Activated CD4-positive, alpha-beta T cell treated with anti-CD3 and anti-CD28 coated beads, Interleukin-2, amount 10 ng/mL, durations not matched to agents 24 days and 14 days (primary cell): ENCODE measurements at regions of chr14 and their contacts with region 1.

Region 1: DNA sequence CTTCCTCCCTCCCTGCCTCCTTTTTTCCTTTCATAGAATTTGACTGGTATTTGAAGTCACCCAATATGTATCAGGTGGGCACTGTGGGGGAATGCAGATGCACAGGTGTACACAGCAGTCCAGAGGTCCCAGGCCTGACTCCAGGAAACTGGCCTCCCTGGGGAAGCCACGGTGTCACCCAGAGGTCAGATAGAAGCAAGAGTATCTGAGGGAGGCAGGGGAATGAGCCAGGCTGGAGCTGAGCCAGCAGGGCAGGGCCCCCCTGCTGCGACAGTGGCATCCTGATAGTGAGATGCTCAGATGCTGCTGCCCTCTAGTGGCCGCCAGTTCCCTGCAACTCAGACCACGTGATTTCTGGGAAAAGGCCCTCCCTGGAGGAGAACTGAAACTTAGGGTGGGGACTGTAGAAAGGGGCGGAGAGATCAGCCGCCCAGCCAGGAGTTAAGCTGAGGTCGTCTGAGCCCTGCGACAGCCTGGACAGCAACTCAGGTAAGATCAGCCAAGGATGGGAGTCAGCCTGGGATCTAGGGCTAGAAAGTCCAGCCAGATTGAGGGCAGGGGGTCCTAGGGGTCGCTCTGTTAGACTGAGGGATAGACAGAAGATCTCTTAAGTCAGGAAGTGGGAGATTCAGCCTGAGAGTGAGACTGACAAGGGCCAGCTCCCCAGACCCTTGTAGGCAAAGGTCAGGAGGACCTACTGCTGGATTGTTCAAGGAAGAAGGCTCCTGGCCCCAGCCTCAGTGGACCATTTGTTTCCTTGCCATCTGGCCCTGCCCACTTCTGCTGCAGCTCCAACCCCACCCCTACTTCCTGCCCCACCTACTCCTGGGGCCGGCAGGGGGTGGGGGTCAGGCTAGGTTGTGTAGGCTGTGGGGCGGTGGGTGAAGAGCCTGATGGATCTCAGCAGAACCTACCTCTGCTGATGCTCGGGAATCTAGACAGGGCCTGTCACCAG is at the start of gene IRF9:
- DNase-seq: peak; percentile 100
- H3K4me3 Mint-ChIP-seq: peak within 1 kb of the TSS; percentile 93
- H3K27ac Mint-ChIP-seq: peak within 1 kb of the TSS; percentile 97
- H3K4me1 Mint-ChIP-seq: peaks cover 51% of the 10 kb centered on the region
- H3K27me3 Mint-ChIP-seq: peaks cover 2% of the 10 kb centered on the region
- total RNA-seq, gene IRF9: 138 and 159 TPM in 2 replicates

Region 2: GRCh38 chr14:24058260-24058950 is 102.7 kb before region 1 on chr14:
- intact Hi-C with region 1: loop called (anchors 5 kb)
- DNase-seq: peak; percentile 89
- H3K4me3 Mint-ChIP-seq: no peak overlapping the region
- H3K27ac Mint-ChIP-seq: no peak overlapping the region
- H3K4me1 Mint-ChIP-seq: peaks cover 11% of the 10 kb centered on the region
- H3K27me3 Mint-ChIP-seq: no peaks in the 10 kb centered on the region

Region 3: GRCh38 chr14:24108336-24108874 is 52.7 kb before region 1 on chr14:
- intact Hi-C with region 1: no loop called
- DNase-seq: no peak
- H3K4me3 Mint-ChIP-seq: peak overlapping the region; percentile 61
- H3K27ac Mint-ChIP-seq: peak overlapping the region; percentile 96
- H3K4me1 Mint-ChIP-seq: peaks cover 25% of the 10 kb centered on the region
- H3K27me3 Mint-ChIP-seq: no peaks in the 10 kb centered on the region

Region 4: GRCh38 chr14:24135834-24136542 is 25.1 kb before region 1 on chr14 and contains the start of gene PSME1:
- intact Hi-C with region 1: loop called (anchors 1 kb)
- DNase-seq: peak; percentile 98
- H3K4me3 Mint-ChIP-seq: peak within 1 kb of the TSS; percentile 94
- H3K27ac Mint-ChIP-seq: peak within 1 kb of the TSS; percentile 93
- H3K4me1 Mint-ChIP-seq: peaks cover 49% of the 10 kb centered on the region
- H3K27me3 Mint-ChIP-seq: no peaks in the 10 kb centered on the region
- total RNA-seq, gene PSME1: 300 and 306 TPM in 2 replicates

Region 5: GRCh38 chr14:24146978-24147760 is 14.0 kb before region 1 on chr14 and contains the start of gene RNF31:
- intact Hi-C with region 1: loop called (anchors 1 kb)
- DNase-seq: peak; percentile 99
- H3K4me3 Mint-ChIP-seq: peak within 1 kb of the TSS; percentile 97
- H3K27ac Mint-ChIP-seq: peak within 1 kb of the TSS; percentile 99
- H3K4me1 Mint-ChIP-seq: peaks cover 59% of the 10 kb centered on the region
- H3K27me3 Mint-ChIP-seq: no peaks in the 10 kb centered on the region
- total RNA-seq, gene RNF31: 95.1 and 95.6 TPM in 2 replicates

Region 6: GRCh38 chr14:24215495-24216344 is 54.6 kb after region 1 on chr14 and contains the start of gene MDP1:
- intact Hi-C with region 1: loop called (anchors 1 kb)
- DNase-seq: peak; percentile 96
- H3K4me3 Mint-ChIP-seq: peak within 1 kb of the TSS; percentile 93
- H3K27ac Mint-ChIP-seq: peak within 1 kb of the TSS; percentile 96
- H3K4me1 Mint-ChIP-seq: peaks cover 43% of the 10 kb centered on the region
- H3K27me3 Mint-ChIP-seq: peaks cover 2% of the 10 kb centered on the region
- total RNA-seq, gene MDP1: 11.6 and 13.5 TPM in 2 replicates

Region 7: GRCh38 chr14:25049568-25050268 is 888.6 kb after region 1 on chr14 and contains the start of gene STXBP6:
- intact Hi-C with region 1: no loop called
- DNase-seq: peak; percentile 56
- H3K4me3 Mint-ChIP-seq: peak within 1 kb of the TSS; percentile 52
- H3K27ac Mint-ChIP-seq: no peak within 1 kb of the TSS
- H3K4me1 Mint-ChIP-seq: peaks cover 2% of the 10 kb centered on the region
- H3K27me3 Mint-ChIP-seq: peaks cover 49% of the 10 kb centered on the region
- total RNA-seq, gene STXBP6: not detected in 2 replicates